ENCODE measurements at regions of chr10 and their contacts with region 1.

Region 1: DNA sequence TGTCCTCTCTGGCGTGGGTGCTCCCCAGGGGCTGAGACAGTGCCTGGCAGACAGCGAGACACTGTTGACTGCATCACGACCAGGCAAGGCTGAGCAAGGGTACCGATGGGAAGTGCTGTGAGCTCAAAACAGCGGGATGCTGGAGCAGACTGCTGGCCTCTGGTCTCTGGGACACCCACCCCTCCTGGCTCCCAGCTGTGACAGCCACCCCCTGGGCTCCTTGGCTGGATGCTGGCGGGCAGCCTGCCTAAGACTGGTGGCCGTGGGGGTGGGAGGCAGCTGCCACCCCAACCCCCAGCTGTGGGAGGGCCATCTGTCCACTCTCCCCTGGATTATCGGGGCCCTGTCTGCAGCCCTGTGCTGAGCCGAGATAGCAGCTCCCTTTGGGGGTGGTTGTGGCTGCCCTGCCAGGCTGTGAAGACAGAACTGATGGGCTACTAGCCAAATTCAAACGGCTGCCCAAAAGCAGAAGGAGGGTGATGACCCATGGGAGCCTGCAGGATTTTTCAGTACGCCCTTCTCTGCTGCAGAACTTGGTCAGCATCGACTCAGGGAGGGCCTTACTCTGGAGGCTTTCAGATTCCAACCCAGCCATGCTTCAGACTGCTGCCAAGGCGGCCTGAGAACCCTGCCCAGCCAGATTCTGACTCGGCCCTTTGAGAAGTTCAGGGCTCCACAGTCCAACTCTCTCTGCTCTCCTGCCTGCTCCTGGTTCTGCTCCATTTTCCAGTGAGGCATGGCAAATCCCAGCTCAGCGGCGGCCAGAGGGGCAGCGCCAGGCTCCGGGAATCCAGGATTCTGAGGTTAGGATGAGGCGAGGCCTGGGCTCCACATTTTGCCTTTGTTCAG is 125.3 kb downstream of the NEURL1 start:
- DNase-seq: no peak
- ATAC-seq: peak in 1 of 2 donors; percentile 39
- H3K4me3 ChIP-seq: no peak overlapping the region
- H3K27ac ChIP-seq: peak overlapping the region; percentile 56
- H3K4me1 ChIP-seq: peaks cover 43% of the 10 kb centered on the region
- H3K27me3 ChIP-seq: no peaks in the 10 kb centered on the region
- CTCF ChIP-seq: no peak

Region 2: GRCh38 chr10:103491493-103492381 is 127.1 kb before region 1 on chr10:
- intact Hi-C with region 1: no loop called
- DNase-seq: no peak
- ATAC-seq: peak in 1 of 2 donors; percentile 39
- H3K4me3 ChIP-seq: no peak overlapping the region
- H3K27ac ChIP-seq: no peak overlapping the region
- H3K4me1 ChIP-seq: peaks cover 17% of the 10 kb centered on the region
- H3K27me3 ChIP-seq: peaks cover 35% of the 10 kb centered on the region
- CTCF ChIP-seq: no peak

Region 3: DNA sequence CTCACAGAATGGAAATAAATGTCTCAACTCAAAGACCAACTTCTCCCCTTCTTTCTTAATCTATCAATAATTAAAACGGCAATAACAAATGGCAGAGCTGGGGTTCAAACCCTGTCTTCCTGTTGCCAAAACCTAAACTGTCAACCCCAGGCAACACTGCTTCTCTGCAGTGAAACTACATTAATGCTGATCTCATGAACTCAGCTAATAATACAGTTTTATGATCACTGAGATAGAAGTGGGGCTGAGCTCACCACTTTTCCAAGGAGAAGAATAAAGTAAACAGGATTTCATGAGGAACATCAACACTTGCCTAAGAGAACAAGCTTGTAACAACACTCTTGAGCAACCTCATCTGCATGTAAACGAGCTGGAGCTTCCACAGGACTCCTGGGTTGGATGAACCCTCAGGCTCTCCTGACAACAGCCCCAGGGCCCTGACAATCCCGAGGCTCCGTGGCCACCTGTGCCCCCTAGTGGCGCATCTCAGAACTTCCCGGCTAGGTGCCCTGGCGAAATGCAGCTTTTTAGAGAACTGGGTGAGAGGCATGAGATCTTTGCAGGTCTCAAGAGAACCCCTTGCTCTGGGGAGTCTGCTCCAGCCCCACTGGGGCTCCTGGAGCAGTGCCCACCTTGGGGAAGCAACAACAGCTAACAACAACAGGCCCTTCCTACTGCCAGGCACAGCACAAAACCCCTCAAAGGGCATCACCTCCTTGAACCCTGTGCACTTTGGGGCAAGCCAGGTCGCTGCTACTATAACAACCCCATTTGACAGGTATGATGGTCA is 67.3 kb after region 1 on chr10:
- intact Hi-C with region 1: loop called (anchors 10 kb)
- DNase-seq: peak; percentile 81
- ATAC-seq: peak; percentile 81 to 90
- H3K4me3 ChIP-seq: no peak overlapping the region
- H3K27ac ChIP-seq: no peak overlapping the region
- H3K4me1 ChIP-seq: peaks cover 12% of the 10 kb centered on the region
- H3K27me3 ChIP-seq: no peaks in the 10 kb centered on the region
- CTCF ChIP-seq: peak; percentile 97

Region 4: DNA sequence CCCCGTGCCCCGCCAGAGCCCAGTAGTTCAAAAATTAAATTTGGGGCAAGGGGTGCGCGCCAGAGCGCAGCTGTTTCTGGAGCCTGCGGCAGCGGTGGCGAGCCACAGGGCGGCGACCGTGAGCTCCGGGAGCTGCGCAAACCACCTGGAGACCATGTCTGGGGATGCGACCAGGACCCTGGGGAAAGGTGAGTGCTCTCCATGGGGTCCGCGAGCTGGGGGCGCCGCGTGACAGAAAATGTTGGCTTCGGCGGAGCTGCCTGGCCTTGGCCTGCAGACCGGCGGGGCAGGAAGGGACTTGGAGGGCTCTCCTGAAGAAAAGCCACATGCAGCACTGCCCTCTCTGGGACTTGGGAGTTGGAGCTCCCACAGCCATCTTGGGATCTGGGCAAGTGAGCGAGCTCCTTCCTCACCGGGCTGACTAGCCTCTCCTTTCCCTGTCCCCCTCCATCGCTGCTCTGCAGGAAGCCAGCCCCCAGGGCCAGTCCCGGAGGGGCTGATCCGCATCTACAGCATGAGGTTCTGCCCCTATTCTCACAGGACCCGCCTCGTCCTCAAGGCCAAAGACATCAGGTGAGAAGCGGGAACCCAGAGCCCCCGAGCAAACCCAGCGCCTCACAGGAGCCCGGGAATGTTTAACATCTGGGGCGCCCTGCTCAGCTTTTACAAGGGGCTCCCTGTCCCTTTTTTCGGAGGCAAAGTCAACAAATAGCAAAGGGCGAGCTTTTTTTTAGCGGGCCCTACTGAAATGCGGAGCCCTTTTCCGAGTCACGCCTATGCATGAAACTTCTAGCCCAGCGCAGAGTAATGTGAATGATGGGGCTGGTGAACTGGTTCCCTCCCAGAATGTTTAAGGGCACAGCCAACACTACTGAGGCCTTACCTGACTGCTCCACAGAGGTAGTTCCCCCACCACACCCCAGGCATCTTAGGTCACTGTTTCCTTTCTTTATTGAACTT is 656.2 kb after region 1 on chr10:
- intact Hi-C with region 1: no loop called
- DNase-seq: peak; percentile 76
- ATAC-seq: peak; percentile 91 to 96
- H3K4me3 ChIP-seq: peak overlapping the region; percentile 51
- H3K27ac ChIP-seq: no peak overlapping the region
- H3K4me1 ChIP-seq: no peaks in the 10 kb centered on the region
- H3K27me3 ChIP-seq: peaks cover 8% of the 10 kb centered on the region
- CTCF ChIP-seq: peak; percentile 83

Measured in lower lobe of right lung (tissue), 2 donors.